Psoas muscle (tissue), 8 donors: ENCODE measurements at regions of chr2 and their contacts with region 1.

Region 1: DNA sequence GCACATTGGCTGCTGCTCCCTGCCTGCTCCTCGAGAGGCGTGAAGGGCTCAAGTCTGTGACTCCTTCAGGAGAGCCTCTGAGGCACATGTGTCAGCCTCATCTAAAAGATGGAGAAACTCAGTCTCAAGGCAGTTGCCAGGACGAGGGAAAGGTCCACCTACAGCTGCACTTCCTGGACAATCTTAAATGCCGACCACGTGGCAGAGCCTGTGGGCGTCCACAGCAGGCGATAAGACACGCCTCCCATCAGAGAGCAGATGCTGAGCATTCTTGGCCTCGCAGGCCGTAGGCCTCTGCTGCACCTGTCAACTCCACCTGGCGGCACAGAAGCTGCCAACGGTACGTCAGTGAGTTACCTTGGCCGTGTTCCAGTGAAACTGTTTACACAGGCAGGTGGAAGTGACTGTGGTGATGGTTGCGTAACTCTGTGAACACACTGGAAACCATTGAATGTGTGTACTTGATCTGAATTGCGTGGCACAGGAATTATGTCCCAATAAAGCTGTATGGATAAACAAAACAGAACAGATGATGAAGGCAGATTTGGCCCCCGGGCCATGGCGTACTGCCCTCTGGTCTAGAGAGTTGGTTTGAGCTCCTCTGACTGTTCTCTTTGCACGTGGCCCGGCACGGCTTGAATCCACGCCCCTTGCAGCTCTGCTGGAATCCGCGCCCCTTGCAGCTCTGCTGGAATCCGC is 114.5 kb downstream of the RNF144A start:
- DNase-seq: peak; percentile 52 to 79
- ATAC-seq: peak; percentile 82 to 95 (median 86)
- H3K4me3 ChIP-seq: no peak overlapping the region
- H3K27ac ChIP-seq: peak overlapping the region; percentile 67
- H3K4me1 ChIP-seq: peaks cover 8% of the 10 kb centered on the region
- H3K27me3 ChIP-seq: no peaks in the 10 kb centered on the region
- CTCF ChIP-seq: no peak

Region 2: GRCh38 chr2:6700335-6700734 is 331.4 kb before region 1 on chr2:
- intact Hi-C with region 1: no loop called
- DNase-seq: no peak
- ATAC-seq: no peak
- H3K4me3 ChIP-seq: no peak overlapping the region
- H3K27ac ChIP-seq: no peak overlapping the region
- H3K4me1 ChIP-seq: no peaks in the 10 kb centered on the region
- H3K27me3 ChIP-seq: no peaks in the 10 kb centered on the region
- CTCF ChIP-seq: no peak

Region 3: DNA sequence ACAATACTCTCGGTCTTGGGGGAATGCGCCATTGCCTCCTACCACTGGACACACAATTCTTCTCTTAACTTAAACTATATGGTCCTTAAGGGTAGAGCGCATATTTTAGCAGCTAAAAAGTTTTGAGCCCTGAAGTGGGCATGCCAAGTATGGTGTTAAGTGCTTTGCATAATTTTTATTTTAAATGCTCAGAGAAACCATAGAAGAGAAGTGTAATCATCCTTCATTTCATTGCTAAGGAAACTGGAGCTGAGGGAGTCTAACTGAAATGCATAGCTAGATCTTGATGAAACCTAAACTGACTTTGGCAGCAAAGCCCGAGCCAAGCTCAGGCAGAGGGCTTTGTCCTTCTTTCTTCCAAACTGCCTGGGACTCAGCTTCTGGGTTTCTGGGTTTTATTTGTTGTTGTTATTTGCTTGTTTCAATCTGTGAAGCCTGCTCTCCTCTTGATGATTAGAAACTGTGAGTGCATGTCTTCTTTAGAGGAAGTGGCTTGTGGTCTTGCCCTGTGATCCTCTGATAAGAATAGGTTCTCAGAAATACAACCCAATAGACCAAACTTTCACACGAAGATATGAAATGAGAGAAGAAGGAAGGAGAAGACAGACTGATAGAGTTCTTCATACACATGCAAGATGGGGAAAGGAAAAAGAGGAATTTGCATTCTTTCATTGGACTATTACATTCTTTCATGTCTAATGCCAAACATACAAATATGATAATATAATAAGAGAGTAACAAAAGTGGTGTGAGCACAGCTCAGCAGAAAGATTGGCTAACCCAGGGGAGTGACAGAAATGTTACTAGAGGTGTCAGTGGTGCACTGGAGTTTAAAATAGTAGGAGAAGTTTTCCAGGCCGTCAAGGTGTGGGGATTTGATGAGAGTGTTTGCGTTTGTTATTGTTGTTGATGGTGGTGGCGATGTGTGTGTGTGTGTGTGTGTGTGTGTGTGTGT is 122.0 kb before region 1 on chr2:
- intact Hi-C with region 1: loop called in 1 of 2 experiments (anchors 5 kb)
- DNase-seq: no peak
- ATAC-seq: no peak
- H3K4me3 ChIP-seq: no peak overlapping the region
- H3K27ac ChIP-seq: no peak overlapping the region
- H3K4me1 ChIP-seq: peaks cover 7% of the 10 kb centered on the region
- H3K27me3 ChIP-seq: no peaks in the 10 kb centered on the region
- CTCF ChIP-seq: no peak

Region 4: DNA sequence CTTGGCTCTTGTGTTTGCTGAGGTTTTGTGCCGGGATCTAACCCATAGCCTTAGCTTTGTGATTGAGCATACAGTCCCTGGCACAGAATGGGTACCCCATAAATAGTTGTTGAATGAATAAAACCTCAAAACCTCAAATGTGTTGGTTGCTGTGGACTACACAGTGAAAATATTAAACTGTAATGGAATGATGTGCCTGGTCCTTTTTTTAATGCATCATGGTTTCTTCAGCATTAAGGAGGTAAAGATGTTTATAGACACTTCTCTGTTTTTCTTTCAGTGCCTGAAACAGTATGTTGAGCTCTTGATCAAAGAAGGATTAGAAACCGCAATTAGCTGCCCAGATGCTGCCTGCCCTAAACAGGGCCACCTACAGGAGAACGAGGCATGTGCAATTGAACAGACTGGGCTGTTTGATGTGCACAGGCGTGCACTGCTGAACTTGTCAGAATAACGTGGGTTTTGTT is 17.5 kb before region 1 on chr2:
- intact Hi-C with region 1: loop called in 1 of 2 experiments (anchors 2 kb)
- DNase-seq: no peak
- ATAC-seq: peak in 3 of 4 donors; percentile 35 to 48 (median 38)
- H3K4me3 ChIP-seq: no peak overlapping the region
- H3K27ac ChIP-seq: peak overlapping the region; percentile 85
- H3K4me1 ChIP-seq: peaks cover 93% of the 10 kb centered on the region
- H3K27me3 ChIP-seq: no peaks in the 10 kb centered on the region
- CTCF ChIP-seq: peak; percentile 38